Common myeloid progenitor, CD34-positive (primary cell): ENCODE measurements at regions of chr2 and their contacts with region 1.

Region 1: DNA sequence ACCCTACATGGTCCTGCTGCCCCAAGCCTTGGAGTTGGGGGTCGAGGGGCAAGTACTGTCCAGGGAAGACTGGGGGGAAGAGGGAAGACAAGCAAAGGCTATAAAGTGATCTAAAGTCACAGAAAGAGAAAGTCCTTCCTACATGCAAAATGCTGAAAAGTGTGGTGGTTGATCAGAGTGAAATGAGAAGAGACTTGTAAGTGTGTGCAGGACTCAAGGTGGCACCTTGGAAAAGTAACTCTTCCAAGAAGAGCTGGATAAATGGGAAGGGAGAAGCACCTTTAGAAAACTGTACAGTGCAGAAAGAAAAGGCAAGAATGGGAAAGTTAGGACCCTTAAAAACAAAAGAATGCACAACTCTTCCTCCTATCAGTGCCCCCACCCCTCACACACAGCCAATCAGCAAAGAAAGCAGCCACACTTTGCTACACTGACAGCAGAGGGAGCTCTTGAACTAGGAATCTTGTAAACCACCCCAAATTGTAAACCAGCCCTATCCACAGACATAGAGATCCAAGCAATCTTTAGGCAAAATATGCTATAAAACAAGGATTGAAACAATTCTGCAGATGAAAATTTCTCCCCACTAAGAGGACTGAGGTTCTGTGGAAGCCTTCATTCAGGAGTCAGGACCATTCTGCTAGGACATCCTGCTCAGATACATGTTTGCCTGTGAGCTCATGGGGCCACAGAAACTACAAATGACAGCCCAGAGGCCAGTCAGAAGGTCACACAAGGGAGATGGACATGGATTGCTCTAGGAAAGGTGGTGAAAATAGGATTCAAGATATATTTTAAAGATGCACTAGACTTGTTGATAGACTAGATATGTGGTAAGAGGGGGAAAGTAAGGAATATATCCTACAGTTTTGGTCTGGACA is 146.4 kb downstream of the FTCDNL1 start:
- DNase-seq: peak; percentile 64 to 87 (median 80)
- H3K4me3 ChIP-seq: no peak overlapping the region
- H3K27ac ChIP-seq: no peak overlapping the region
- H3K4me1 ChIP-seq: peaks cover 0 to 10% (median 4%) of the 10 kb centered on the region in 4 experiments
- H3K27me3 ChIP-seq: no peaks in the 10 kb centered on the region

Region 2: GRCh38 chr2:199136681-199137080 is 567.9 kb before region 1 on chr2:
- CTCF ChIA-PET with region 1: no interaction called
- POLR2A ChIA-PET with region 1: no interaction called
- DNase-seq: no peak
- H3K4me3 ChIP-seq: no peak overlapping the region
- H3K27ac ChIP-seq: no peak overlapping the region
- H3K4me1 ChIP-seq: no peaks in the 10 kb centered on the region
- H3K27me3 ChIP-seq: no peaks in the 10 kb centered on the region

Region 3: GRCh38 chr2:199558156-199558555 is 146.4 kb before region 1 on chr2:
- CTCF ChIA-PET with region 1: no interaction called
- POLR2A ChIA-PET with region 1: no interaction called
- DNase-seq: no peak
- H3K4me3 ChIP-seq: no peak overlapping the region
- H3K27ac ChIP-seq: no peak overlapping the region
- H3K4me1 ChIP-seq: no peaks in the 10 kb centered on the region
- H3K27me3 ChIP-seq: no peaks in the 10 kb centered on the region

Region 4: DNA sequence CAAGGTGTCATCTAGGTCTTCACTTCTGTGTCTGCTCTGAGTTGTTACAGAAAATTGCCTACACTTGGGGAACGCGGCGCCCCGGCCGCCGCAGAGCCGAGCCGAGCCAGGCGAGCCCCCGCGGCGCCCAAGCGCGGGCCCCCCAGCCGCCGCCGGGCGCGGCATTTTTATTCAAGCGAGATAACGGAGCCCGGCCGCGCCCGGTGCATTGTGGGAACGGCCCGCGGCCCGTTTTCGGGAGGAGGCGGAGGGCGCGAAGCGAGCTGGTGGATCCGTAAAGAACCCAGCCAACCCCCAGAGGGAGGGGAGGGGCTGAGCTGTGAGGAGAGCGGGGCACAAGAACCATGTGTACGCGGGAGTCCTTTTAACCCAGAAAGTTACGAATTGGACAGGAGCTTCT is 45.4 kb before region 1 on chr2:
- CTCF ChIA-PET with region 1: no interaction called
- POLR2A ChIA-PET with region 1: no interaction called
- DNase-seq: peak; percentile 65 to 80 (median 75)
- H3K4me3 ChIP-seq: peak overlapping the region; percentile 31 to 72 (median 42)
- H3K27ac ChIP-seq: no peak overlapping the region
- H3K4me1 ChIP-seq: peaks cover 0 to 9% (median 3%) of the 10 kb centered on the region in 4 experiments
- H3K27me3 ChIP-seq: no peaks in the 10 kb centered on the region

Region 5: DNA sequence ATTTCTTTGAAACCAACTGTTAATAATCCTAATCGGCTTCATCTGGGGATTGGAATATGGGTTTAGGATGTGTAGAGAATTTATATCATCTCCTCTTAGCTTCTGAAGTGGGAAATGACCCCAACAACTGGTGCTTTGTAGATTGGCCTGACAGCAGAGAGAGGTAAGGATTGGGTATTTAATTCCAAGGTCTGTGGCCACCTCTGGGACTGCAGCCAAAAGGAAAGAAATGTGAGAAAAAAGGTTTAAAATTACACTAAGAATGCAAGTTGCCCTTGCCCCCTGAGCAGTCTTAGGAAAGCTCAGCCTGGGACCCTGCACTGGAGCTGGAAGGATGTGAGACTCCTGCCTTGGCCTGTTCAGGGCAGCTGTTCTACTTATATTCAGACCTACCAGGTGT is 10.7 kb before region 1 on chr2:
- CTCF ChIA-PET with region 1: interaction called, 14 read pairs
- POLR2A ChIA-PET with region 1: no interaction called
- DNase-seq: no peak
- H3K4me3 ChIP-seq: no peak overlapping the region
- H3K27ac ChIP-seq: no peak overlapping the region
- H3K4me1 ChIP-seq: no peaks in the 10 kb centered on the region
- H3K27me3 ChIP-seq: no peaks in the 10 kb centered on the region

Region 6: DNA sequence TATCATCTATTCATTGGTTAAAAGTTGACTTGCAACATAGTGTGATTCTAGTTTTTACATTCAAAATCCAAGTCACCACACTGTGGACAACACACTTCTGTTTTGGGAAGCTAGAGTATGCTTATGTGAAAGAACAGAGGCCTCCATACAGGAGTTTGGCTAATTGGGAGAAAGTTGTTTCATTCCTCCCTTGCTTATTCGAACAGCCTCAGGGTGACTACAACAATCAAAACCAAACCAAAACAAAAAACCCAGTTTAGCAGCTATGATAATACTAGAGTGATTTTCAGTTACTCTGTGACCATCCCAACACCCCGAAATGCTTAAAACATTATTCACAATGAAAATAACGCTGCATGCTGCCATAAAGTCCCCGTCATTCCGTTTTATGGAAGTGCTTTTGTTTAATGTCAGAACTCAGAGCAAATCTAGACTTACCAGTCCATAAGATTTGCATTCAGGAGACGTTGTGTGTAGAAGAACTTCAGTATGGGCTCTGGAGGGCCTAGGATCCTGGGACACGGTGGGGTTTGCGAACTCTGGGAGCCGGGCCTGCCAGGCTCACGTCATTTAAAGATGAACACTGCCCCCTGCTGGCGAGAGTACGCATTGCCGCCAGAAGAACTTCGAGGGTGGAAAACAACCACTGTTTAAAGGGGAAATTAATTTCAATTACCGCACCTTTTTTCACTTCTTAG is 35.0 kb after region 1 on chr2:
- CTCF ChIA-PET with region 1: interaction called, 118 read pairs
- POLR2A ChIA-PET with region 1: no interaction called
- DNase-seq: peak; percentile 65 to 83 (median 76)
- H3K4me3 ChIP-seq: peak overlapping the region in 3 of 7 experiments; percentile 20 to 34 (median 31)
- H3K27ac ChIP-seq: no peak overlapping the region
- H3K4me1 ChIP-seq: peaks cover 20 to 31% (median 27%) of the 10 kb centered on the region in 4 experiments
- H3K27me3 ChIP-seq: no peaks in the 10 kb centered on the region

Region 7: DNA sequence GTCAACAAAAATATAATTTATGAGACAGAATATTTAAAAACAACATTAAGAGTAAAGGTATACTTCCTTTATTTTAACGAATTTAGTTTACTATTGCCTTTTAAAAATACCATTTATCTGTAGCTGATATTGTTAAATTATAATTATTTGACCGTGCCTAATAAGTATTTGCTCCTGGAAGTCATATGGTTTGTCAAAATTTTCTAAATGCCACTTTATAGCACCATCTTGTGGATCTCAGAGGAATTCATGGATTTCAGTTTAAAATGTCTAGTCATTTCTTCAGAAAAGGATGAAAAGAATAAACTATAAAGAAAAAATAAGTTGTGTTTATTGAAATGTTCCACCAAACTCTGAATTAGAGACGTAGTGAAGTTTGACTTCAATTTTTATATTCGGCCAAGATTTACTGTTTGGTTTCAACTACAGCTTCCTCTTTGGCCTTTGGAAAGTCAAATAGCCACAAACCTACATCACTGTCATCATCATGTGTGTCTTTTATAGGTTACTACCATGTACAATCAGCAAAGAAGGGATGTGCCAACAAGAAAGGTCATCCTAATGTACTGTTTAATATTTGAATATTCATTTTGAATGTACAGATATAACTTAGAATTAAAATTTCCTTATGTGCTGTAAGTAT is 156.7 kb after region 1 on chr2:
- CTCF ChIA-PET with region 1: interaction called, 23 read pairs
- POLR2A ChIA-PET with region 1: no interaction called
- DNase-seq: peak; percentile 29 to 57 (median 52)
- H3K4me3 ChIP-seq: no peak overlapping the region
- H3K27ac ChIP-seq: no peak overlapping the region
- H3K4me1 ChIP-seq: peaks cover 0 to 3% (median 0%) of the 10 kb centered on the region in 4 experiments
- H3K27me3 ChIP-seq: no peaks in the 10 kb centered on the region

Region 8: GRCh38 chr2:199940373-199940772 is 235.8 kb after region 1 on chr2:
- CTCF ChIA-PET with region 1: interaction called, 73 read pairs
- POLR2A ChIA-PET with region 1: no interaction called
- DNase-seq: peak; percentile 34 to 69 (median 64)
- H3K4me3 ChIP-seq: no peak overlapping the region
- H3K27ac ChIP-seq: no peak overlapping the region
- H3K4me1 ChIP-seq: no peaks in the 10 kb centered on the region
- H3K27me3 ChIP-seq: no peaks in the 10 kb centered on the region